ENCODE measurements at regions of chr6 and their contacts with region 1.

Region 1: DNA sequence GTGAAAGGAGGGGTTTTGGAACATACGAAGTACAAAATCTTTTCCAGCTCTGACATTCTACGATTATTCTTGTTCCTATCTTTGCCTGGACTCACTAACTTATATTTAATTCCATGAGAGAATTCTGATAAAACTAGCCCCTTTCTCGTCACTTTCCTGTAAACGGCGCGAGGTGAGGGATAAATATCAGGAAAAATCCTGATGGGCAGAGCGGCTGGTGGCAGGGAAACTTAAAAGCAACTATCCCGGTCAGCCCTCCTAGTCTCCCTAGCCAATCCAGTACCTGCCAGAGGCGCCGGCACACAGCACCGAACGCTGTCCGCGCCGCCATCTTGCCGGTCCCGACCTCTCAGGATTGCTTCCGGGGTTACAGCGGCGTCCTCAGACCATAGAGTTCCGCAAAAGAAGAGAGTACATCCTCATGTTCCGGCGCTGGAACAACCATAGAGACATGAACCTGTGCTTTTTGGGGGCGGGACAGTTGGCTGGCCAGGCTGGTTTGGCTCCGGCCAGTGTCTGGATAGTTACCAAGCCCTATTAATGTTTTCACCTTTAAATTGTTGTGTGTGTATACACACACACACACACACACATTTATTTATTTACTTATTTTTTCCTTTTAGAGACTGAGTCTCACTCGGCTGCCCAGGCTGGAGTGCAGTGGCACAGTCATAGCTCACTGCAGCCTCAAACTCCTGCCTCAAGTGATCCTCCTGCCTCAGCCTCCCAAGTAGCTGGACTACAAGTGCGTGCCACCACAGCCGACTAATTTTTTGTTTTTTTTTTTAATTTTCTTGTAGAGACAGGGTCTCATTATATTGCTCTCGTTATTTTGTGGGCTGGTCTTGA is at the start of gene MRPS10:
- DNase-seq: peak; percentile 92
- ATAC-seq: peak; percentile 99
- H3K4me3 ChIP-seq: peak within 1 kb of the TSS; percentile 76 to 98 (median 86)
- H3K4me3 Mint-ChIP-seq: peak within 1 kb of the TSS; percentile 99
- H3K27ac ChIP-seq: peak within 1 kb of the TSS; percentile 58 to 76
- H3K27ac Mint-ChIP-seq: peak within 1 kb of the TSS; percentile 98
- H3K4me1 ChIP-seq: peaks cover 7 to 14% of the 10 kb centered on the region in 2 donors
- H3K4me1 Mint-ChIP-seq: peaks cover 23% of the 10 kb centered on the region
- H3K27me3 ChIP-seq: no peaks in the 10 kb centered on the region
- H3K27me3 Mint-ChIP-seq: peaks cover 4% of the 10 kb centered on the region
- CTCF ChIP-seq: no peak
- total RNA-seq, gene MRPS10: 26.4 and 28.6 TPM in 2 replicates

Region 2: DNA sequence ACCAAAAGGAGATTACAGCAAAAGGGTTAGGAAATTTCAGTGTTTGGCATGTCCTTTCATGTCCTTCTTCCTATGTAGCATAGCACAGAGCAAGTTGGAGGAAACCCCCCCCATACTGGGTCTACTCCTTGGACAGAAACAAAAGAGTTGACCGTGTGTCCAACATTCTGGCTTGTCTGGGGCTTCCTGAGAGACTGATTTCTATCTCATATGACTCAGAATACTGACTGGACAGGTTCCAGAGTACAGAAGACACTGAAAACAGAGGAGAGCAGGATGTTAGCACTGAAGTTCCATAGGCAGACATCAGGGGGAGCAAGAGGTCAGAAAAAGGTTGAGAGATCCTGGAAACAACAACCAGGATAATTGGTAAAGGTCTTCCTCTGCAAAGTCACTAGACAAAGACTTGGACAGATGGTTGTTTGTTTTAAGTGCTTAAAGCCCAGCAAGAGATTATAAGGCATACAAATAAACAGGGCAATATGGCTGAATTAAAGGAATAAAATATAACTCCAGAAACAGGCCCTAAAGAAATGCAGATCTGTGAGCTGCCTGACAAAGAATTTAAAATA is 371.0 kb before region 1 on chr6:
- CTCF ChIA-PET with region 1: interaction called, 8 read pairs
- POLR2A ChIA-PET with region 1: no interaction called
- intact Hi-C with region 1: loop called (anchors 5 kb)
- DNase-seq: peak; percentile 70
- ATAC-seq: peak; percentile 49
- H3K4me3 ChIP-seq: no peak overlapping the region
- H3K4me3 Mint-ChIP-seq: no peak overlapping the region
- H3K27ac ChIP-seq: no peak overlapping the region
- H3K27ac Mint-ChIP-seq: no peak overlapping the region
- H3K4me1 ChIP-seq: no peaks in the 10 kb centered on the region
- H3K4me1 Mint-ChIP-seq: no peaks in the 10 kb centered on the region
- H3K27me3 ChIP-seq: no peaks in the 10 kb centered on the region
- H3K27me3 Mint-ChIP-seq: no peaks in the 10 kb centered on the region
- CTCF ChIP-seq: peak; percentile 87

Region 3: DNA sequence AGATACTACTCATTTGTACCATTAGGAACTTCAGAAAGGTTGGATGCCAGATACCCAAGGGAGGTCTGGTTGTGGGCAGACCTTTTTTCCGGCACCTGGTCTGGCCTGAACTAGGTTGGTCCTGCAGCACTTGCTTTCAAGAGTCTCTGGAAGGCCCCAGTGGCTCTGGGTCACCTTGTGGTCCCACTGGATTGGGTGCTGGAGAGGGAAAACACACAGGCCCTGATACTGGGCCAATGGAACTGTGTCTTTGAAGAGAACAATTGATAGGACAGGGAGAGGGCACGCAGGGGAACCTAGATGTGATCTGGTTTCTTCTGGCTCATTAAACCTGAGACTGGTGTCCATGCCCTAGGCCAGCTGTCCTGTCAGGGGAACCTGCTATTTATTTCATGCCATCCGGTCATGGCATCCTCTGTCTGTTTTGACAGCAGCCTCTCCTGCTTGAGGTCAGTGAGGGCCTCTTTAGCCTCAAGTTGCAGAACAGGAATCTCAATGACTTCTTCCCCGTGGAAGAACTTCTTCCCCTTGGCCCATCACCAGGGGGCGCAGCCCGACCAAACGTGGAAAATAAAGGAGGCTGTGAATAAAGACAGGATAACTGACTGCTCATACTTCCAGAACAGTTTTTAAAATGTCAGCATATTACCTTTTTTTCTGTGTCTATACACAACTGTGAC is 142.4 kb before region 1 on chr6:
- CTCF ChIA-PET with region 1: no interaction called
- POLR2A ChIA-PET with region 1: no interaction called
- intact Hi-C with region 1: loop called (anchors 1 kb)
- DNase-seq: peak; percentile 56
- ATAC-seq: no peak
- H3K4me3 ChIP-seq: no peak overlapping the region
- H3K4me3 Mint-ChIP-seq: no peak overlapping the region
- H3K27ac ChIP-seq: no peak overlapping the region
- H3K27ac Mint-ChIP-seq: no peak overlapping the region
- H3K4me1 ChIP-seq: no peaks in the 10 kb centered on the region
- H3K4me1 Mint-ChIP-seq: no peaks in the 10 kb centered on the region
- H3K27me3 ChIP-seq: no peaks in the 10 kb centered on the region
- H3K27me3 Mint-ChIP-seq: no peaks in the 10 kb centered on the region
- CTCF ChIP-seq: peak; percentile 70

Region 4: DNA sequence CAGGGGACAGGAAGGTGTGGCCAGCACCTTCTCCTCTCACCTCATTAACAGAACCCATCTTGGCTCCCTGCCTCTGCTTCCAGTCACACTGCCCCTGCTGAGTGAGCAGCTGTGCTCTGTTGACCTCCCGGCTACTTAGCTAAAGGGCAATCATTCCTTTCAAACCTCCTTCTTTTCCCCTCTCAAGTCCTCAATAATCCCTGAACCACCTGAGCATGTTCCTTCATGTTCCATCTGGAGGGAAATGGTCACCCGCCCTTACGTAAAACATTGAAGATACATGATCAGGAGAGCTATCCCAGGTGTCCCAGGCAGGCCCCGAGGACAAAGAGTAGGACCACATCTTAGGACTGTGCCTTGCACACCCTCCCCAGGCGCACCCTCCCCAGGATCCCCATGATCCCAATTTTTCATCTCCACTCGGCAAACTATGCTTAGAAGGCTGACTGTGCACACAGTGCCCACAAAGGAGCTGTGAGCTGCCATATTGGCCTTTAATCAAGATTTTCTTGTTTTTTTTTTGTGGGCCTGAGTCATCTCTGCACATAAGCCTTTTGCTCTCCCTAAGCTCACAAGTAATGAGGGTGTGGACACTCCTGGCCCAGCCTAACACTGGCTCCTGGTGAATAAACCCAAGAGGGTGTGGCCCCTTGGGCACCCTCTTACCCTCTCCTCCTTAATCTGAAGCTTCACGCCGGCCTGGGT is 21.8 kb after region 1 on chr6:
- CTCF ChIA-PET with region 1: no interaction called
- POLR2A ChIA-PET with region 1: no interaction called
- intact Hi-C with region 1: no loop called
- DNase-seq: no peak
- ATAC-seq: no peak
- H3K4me3 ChIP-seq: no peak overlapping the region
- H3K4me3 Mint-ChIP-seq: no peak overlapping the region
- H3K27ac ChIP-seq: no peak overlapping the region
- H3K27ac Mint-ChIP-seq: no peak overlapping the region
- H3K4me1 ChIP-seq: no peaks in the 10 kb centered on the region
- H3K4me1 Mint-ChIP-seq: no peaks in the 10 kb centered on the region
- H3K27me3 ChIP-seq: no peaks in the 10 kb centered on the region
- H3K27me3 Mint-ChIP-seq: no peaks in the 10 kb centered on the region
- CTCF ChIP-seq: no peak

Region 5: DNA sequence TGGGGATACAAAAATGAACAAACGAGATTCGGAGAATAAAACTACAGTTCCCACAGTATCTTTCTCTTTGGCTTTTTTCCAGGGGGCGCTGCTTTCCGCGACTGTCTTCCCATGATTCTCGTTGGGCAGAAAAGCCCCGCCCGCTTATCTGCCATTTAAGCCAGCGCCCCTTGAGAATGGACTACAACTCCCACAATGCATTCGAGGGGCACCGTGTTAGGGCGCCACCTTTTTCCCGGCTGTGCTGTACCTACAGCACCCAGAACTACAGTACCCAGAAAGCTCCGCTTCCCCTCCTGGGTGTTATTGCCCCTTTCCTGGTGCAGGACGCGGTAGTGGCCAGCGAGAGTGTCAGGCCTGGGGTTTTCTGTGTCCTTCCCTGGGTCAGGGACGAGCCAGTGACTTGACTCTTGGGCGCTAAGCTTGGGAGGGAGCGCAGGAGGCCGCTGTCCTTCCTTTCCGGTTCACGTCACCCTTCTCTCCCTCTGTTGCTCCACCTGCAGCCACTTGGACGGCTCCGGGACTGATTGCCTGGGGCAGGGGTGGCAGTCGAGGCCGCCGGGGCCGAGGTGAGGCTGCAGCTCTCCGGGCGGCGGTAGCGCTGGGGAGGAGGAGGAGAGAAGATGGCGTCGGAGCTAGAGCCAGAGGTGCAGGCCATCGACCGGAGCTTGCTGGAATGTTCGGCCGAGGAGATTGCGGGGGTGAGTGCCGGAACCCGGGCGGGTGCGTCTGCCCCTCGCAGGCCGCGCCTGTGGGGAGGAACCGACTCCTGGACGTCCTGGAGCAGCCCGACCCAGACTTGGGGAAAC is 346.2 kb after region 1 on chr6 and contains the start of gene UBR2:
- CTCF ChIA-PET with region 1: interaction called, 3 read pairs
- POLR2A ChIA-PET with region 1: no interaction called
- intact Hi-C with region 1: loop called (anchors 1 kb)
- DNase-seq: peak; percentile 95
- ATAC-seq: peak; percentile 96
- H3K4me3 ChIP-seq: peak within 1 kb of the TSS; percentile 78 to 98 (median 91)
- H3K4me3 Mint-ChIP-seq: peak within 1 kb of the TSS; percentile 98
- H3K27ac ChIP-seq: peak within 1 kb of the TSS; percentile 90 to 91
- H3K27ac Mint-ChIP-seq: peak within 1 kb of the TSS; percentile 98
- H3K4me1 ChIP-seq: peaks cover 19 to 25% of the 10 kb centered on the region in 2 donors
- H3K4me1 Mint-ChIP-seq: peaks cover 36% of the 10 kb centered on the region
- H3K27me3 ChIP-seq: no peaks in the 10 kb centered on the region
- H3K27me3 Mint-ChIP-seq: no peaks in the 10 kb centered on the region
- CTCF ChIP-seq: peak; percentile 41
- total RNA-seq, gene UBR2: 56.2 and 61.5 TPM in 2 replicates

Region 6: GRCh38 chr6:43687437-43688347 is 1469.9 kb after region 1 on chr6 and contains the start of gene MRPS18A:
- CTCF ChIA-PET with region 1: no interaction called
- POLR2A ChIA-PET with region 1: no interaction called
- intact Hi-C with region 1: loop called (anchors 10 kb)
- DNase-seq: peak; percentile 83
- ATAC-seq: peak; percentile 92
- H3K4me3 ChIP-seq: peak within 1 kb of the TSS; percentile 80 to 98 (median 96)
- H3K4me3 Mint-ChIP-seq: peak within 1 kb of the TSS; percentile 97
- H3K27ac ChIP-seq: peak within 1 kb of the TSS; percentile 76 to 90
- H3K27ac Mint-ChIP-seq: peak within 1 kb of the TSS; percentile 92
- H3K4me1 ChIP-seq: peaks cover 37 to 42% of the 10 kb centered on the region in 2 donors
- H3K4me1 Mint-ChIP-seq: peaks cover 48% of the 10 kb centered on the region
- H3K27me3 ChIP-seq: no peaks in the 10 kb centered on the region
- H3K27me3 Mint-ChIP-seq: no peaks in the 10 kb centered on the region
- CTCF ChIP-seq: no peak
- total RNA-seq, gene MRPS18A: 37.0 and 39.6 TPM in 2 replicates